CD8-positive, alpha-beta T cell (primary cell): ENCODE measurements at regions of chr18 and their contacts with region 1.

Region 1: GRCh38 chr18:5106730-5107129 is 90.3 kb downstream of the AKAIN1 start:
- DNase-seq: peak in 1 of 9 experiments; percentile 20
- ATAC-seq: peak; percentile 56
- H3K4me3 ChIP-seq: no peak overlapping the region
- H3K4me3 Mint-ChIP-seq: no peak overlapping the region
- H3K27ac ChIP-seq: no peak overlapping the region
- H3K27ac Mint-ChIP-seq: no peak overlapping the region
- H3K4me1 ChIP-seq: no peaks in the 10 kb centered on the region
- H3K4me1 Mint-ChIP-seq: peaks cover 5% of the 10 kb centered on the region
- H3K27me3 ChIP-seq: no peaks in the 10 kb centered on the region
- H3K27me3 Mint-ChIP-seq: no peaks in the 10 kb centered on the region
- CTCF ChIP-seq: no peak

Region 2: GRCh38 chr18:5122270-5122669 is 15.5 kb after region 1 on chr18:
- CTCF ChIA-PET with region 1: no interaction called
- POLR2A ChIA-PET with region 1: no interaction called
- intact Hi-C with region 1: no loop called
- DNase-seq: no peak
- ATAC-seq: no peak
- H3K4me3 ChIP-seq: no peak overlapping the region
- H3K4me3 Mint-ChIP-seq: no peak overlapping the region
- H3K27ac ChIP-seq: no peak overlapping the region
- H3K27ac Mint-ChIP-seq: no peak overlapping the region
- H3K4me1 ChIP-seq: no peaks in the 10 kb centered on the region
- H3K4me1 Mint-ChIP-seq: peaks cover 2% of the 10 kb centered on the region
- H3K27me3 ChIP-seq: no peaks in the 10 kb centered on the region
- H3K27me3 Mint-ChIP-seq: no peaks in the 10 kb centered on the region
- CTCF ChIP-seq: no peak

Region 3: GRCh38 chr18:5207471-5208150 is 100.9 kb after region 1 on chr18:
- CTCF ChIA-PET with region 1: no interaction called
- POLR2A ChIA-PET with region 1: no interaction called
- intact Hi-C with region 1: loop called in 1 of 2 experiments (anchors 10 kb)
- DNase-seq: no peak
- ATAC-seq: no peak
- H3K4me3 ChIP-seq: no peak overlapping the region
- H3K4me3 Mint-ChIP-seq: no peak overlapping the region
- H3K27ac ChIP-seq: no peak overlapping the region
- H3K27ac Mint-ChIP-seq: no peak overlapping the region
- H3K4me1 ChIP-seq: no peaks in the 10 kb centered on the region
- H3K4me1 Mint-ChIP-seq: peaks cover 11% of the 10 kb centered on the region
- H3K27me3 ChIP-seq: no peaks in the 10 kb centered on the region
- H3K27me3 Mint-ChIP-seq: peaks cover 2% of the 10 kb centered on the region
- CTCF ChIP-seq: no peak

Region 4: DNA sequence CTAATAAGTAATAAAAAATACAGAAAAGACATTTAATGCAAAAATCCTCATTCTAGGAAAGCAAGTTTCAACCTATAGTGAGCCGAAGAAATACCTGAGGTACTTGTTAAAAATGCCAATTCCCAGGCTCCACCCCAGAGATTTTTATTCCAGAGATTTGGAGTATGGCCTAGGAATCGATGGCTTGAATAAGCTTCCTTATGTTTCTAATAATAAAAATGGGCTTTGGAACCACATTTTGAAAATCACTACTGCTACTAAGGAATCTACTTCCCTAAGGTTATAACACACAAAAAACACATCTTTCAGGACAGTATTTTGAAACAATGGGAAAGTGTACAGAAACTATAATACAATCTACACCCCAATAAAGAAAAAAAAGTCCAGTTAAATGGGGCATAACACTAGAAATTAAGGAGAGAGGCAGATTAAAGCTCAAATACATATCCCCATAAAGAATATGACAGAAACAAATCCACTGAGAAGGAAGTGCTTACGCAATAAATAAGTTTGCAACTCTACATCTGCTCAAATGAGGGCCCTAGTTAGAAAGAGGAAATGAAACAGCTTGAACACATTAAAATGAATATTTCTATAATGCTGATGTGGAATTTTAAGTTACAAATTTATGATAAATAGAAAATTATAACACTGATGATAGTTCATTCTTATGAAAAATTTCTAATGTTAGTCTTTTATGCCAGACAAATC is 333.4 kb after region 1 on chr18:
- CTCF ChIA-PET with region 1: no interaction called
- POLR2A ChIA-PET with region 1: no interaction called
- intact Hi-C with region 1: loop called in 1 of 2 experiments (anchors 10 kb)
- DNase-seq: no peak
- ATAC-seq: no peak
- H3K4me3 ChIP-seq: no peak overlapping the region
- H3K4me3 Mint-ChIP-seq: no peak overlapping the region
- H3K27ac ChIP-seq: no peak overlapping the region
- H3K27ac Mint-ChIP-seq: no peak overlapping the region
- H3K4me1 ChIP-seq: no peaks in the 10 kb centered on the region
- H3K4me1 Mint-ChIP-seq: no peaks in the 10 kb centered on the region
- H3K27me3 ChIP-seq: peaks cover 0 to 2% of the 10 kb centered on the region in 2 experiments
- H3K27me3 Mint-ChIP-seq: no peaks in the 10 kb centered on the region
- CTCF ChIP-seq: no peak

Region 5: GRCh38 chr18:5884375-5884774 is 777.6 kb after region 1 on chr18:
- CTCF ChIA-PET with region 1: no interaction called
- POLR2A ChIA-PET with region 1: no interaction called
- intact Hi-C with region 1: loop called in 1 of 2 experiments (anchors 10 kb)
- DNase-seq: no peak
- ATAC-seq: no peak
- H3K4me3 ChIP-seq: no peak overlapping the region
- H3K4me3 Mint-ChIP-seq: no peak overlapping the region
- H3K27ac ChIP-seq: no peak overlapping the region
- H3K27ac Mint-ChIP-seq: no peak overlapping the region
- H3K4me1 ChIP-seq: no peaks in the 10 kb centered on the region
- H3K4me1 Mint-ChIP-seq: no peaks in the 10 kb centered on the region
- H3K27me3 ChIP-seq: no peaks in the 10 kb centered on the region
- H3K27me3 Mint-ChIP-seq: peaks cover 20% of the 10 kb centered on the region
- CTCF ChIP-seq: no peak